CD4-positive, alpha-beta memory T cell (primary cell): ENCODE measurements at regions of chr11 and their contacts with region 1.

Region 1: GRCh38 chr11:33976495-33977199 is 74.9 kb upstream of the CAPRIN1 start:
- DNase-seq: no peak
- H3K4me3 ChIP-seq: no peak overlapping the region
- H3K4me3 Mint-ChIP-seq: no peak overlapping the region
- H3K27ac ChIP-seq: no peak overlapping the region
- H3K27ac Mint-ChIP-seq: no peak overlapping the region
- H3K4me1 ChIP-seq: no peaks in the 10 kb centered on the region
- H3K4me1 Mint-ChIP-seq: no peaks in the 10 kb centered on the region
- H3K27me3 ChIP-seq: no peaks in the 10 kb centered on the region
- H3K27me3 Mint-ChIP-seq: peaks cover 5 to 17% of the 10 kb centered on the region in 2 donors

Region 2: GRCh38 chr11:33987975-33988580 is 11.4 kb after region 1 on chr11:
- CTCF ChIA-PET with region 1: interaction called, 18 read pairs
- POLR2A ChIA-PET with region 1: no interaction called
- intact Hi-C with region 1: no loop called
- DNase-seq: peak; percentile 61 to 73 (median 67)
- H3K4me3 ChIP-seq: no peak overlapping the region
- H3K4me3 Mint-ChIP-seq: no peak overlapping the region
- H3K27ac ChIP-seq: no peak overlapping the region
- H3K27ac Mint-ChIP-seq: no peak overlapping the region
- H3K4me1 ChIP-seq: peaks cover 6% of the 10 kb centered on the region
- H3K4me1 Mint-ChIP-seq: peaks cover 3 to 7% (median 5%) of the 10 kb centered on the region in 4 donors
- H3K27me3 ChIP-seq: no peaks in the 10 kb centered on the region
- H3K27me3 Mint-ChIP-seq: peaks cover 1 to 8% of the 10 kb centered on the region in 2 donors

Region 3: DNA sequence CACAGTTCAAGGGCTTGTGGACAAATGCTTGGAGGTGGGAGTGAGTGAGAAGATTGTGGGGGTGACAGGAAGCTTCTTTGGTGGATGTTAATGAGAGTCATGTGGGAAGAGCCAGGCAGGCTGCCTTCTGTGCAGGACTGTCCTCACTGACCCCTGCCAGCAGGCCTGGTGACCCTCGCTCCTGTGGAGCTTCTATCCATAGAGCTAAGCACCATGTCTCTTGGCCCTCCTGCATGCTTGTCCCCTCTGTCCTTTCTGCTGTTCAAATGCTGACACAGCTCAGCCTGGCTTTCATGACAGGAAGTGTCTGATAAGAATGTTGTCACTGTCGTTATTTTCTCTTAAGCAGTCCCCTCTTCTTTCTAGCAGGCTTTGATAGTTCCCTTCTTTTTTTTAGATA is 166.4 kb after region 1 on chr11:
- CTCF ChIA-PET with region 1: no interaction called
- POLR2A ChIA-PET with region 1: no interaction called
- intact Hi-C with region 1: no loop called
- DNase-seq: no peak
- H3K4me3 ChIP-seq: no peak overlapping the region
- H3K4me3 Mint-ChIP-seq: no peak overlapping the region
- H3K27ac ChIP-seq: no peak overlapping the region
- H3K27ac Mint-ChIP-seq: peak overlapping the region in 1 of 7 donors; percentile 71
- H3K4me1 ChIP-seq: no peaks in the 10 kb centered on the region
- H3K4me1 Mint-ChIP-seq: peaks cover 0 to 4% (median 0%) of the 10 kb centered on the region in 4 donors
- H3K27me3 ChIP-seq: no peaks in the 10 kb centered on the region
- H3K27me3 Mint-ChIP-seq: no peaks in the 10 kb centered on the region

Region 4: GRCh38 chr11:34192481-34193401 is 216.1 kb after region 1 on chr11:
- CTCF ChIA-PET with region 1: no interaction called
- POLR2A ChIA-PET with region 1: no interaction called
- intact Hi-C with region 1: no loop called
- DNase-seq: no peak
- H3K4me3 ChIP-seq: no peak overlapping the region
- H3K4me3 Mint-ChIP-seq: no peak overlapping the region
- H3K27ac ChIP-seq: no peak overlapping the region
- H3K27ac Mint-ChIP-seq: no peak overlapping the region
- H3K4me1 ChIP-seq: no peaks in the 10 kb centered on the region
- H3K4me1 Mint-ChIP-seq: peaks cover 0 to 2% (median 0%) of the 10 kb centered on the region in 4 donors
- H3K27me3 ChIP-seq: no peaks in the 10 kb centered on the region
- H3K27me3 Mint-ChIP-seq: peaks cover 0 to 1% of the 10 kb centered on the region in 2 donors